ENCODE measurements at regions of chr10 and their contacts with region 1.

Region 1: DNA sequence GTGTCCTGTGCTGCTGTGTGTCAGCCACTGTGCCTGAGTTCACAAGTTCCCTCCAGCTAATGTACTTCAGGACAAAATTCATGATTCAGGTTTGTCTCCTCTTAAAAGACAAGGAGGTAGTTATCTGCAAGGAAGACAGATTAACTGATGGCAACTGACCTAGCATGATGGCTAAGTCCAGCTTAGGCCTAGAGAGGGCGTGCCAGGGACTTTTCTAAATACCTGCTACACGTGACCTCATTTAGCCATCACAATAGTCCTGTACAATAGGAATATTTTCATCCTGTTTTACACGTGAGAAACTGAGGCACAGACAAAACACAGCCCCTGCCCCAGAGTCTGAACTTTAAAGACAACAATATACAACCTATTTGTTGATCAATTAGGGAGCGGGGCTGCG is 275.7 kb downstream of the XPNPEP1 start:
- DNase-seq: no peak
- H3K4me3 ChIP-seq: no peak overlapping the region
- H3K27ac ChIP-seq: no peak overlapping the region
- H3K4me1 ChIP-seq: no peaks in the 10 kb centered on the region
- H3K27me3 ChIP-seq: peaks cover 1% of the 10 kb centered on the region
- CTCF ChIP-seq: peak in 1 of 2 donors; percentile 26

Region 2: DNA sequence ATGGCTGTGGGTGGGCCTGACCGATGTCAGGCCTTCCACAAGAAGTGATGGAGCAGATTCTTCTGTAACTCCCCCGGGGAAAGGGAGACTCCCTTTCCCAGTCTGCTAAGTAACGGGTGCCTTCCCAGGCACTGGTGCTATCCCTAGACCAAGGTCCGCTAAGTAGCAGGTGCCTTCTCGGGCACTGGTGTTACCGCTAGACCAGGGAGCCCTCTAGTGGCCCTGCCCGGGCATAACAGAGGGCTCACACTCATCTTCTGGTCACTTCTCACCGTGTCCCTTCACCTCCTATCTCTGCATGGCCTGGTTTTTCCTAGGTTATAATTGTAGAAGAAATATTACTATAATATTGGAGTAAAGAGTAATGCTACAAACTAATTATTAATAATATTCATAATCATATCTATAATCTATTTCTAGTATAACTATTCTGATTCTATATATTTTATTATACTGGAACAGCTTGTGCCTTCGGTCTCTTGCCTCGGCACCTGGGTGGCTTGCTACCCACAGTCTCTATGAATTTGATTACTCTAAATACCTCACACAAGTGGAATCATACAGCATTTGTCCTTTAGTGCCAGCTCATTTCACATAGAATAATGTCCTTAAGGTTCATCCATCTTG is 1103.0 kb before region 1 on chr10:
- CTCF ChIA-PET with region 1: no interaction called
- dilution Hi-C with region 1: no loop called
- in situ Hi-C with region 1: no loop called
- intact Hi-C with region 1: no loop called
- DNase-seq: peak; percentile 36
- H3K4me3 ChIP-seq: no peak overlapping the region
- H3K27ac ChIP-seq: no peak overlapping the region
- H3K4me1 ChIP-seq: no peaks in the 10 kb centered on the region
- H3K27me3 ChIP-seq: no peaks in the 10 kb centered on the region
- CTCF ChIP-seq: peak; percentile 75 to 93

Region 3: GRCh38 chr10:109126016-109126415 is 521.6 kb before region 1 on chr10:
- CTCF ChIA-PET with region 1: no interaction called
- dilution Hi-C with region 1: no loop called
- in situ Hi-C with region 1: no loop called
- intact Hi-C with region 1: no loop called
- DNase-seq: no peak
- H3K4me3 ChIP-seq: no peak overlapping the region
- H3K27ac ChIP-seq: no peak overlapping the region
- H3K4me1 ChIP-seq: no peaks in the 10 kb centered on the region
- H3K27me3 ChIP-seq: no peaks in the 10 kb centered on the region
- CTCF ChIP-seq: no peak

Region 4: GRCh38 chr10:109762555-109762954 is 114.9 kb after region 1 on chr10:
- CTCF ChIA-PET with region 1: no interaction called
- dilution Hi-C with region 1: no loop called
- in situ Hi-C with region 1: no loop called
- intact Hi-C with region 1: loop called (anchors 1 kb)
- DNase-seq: no peak
- H3K4me3 ChIP-seq: no peak overlapping the region
- H3K27ac ChIP-seq: no peak overlapping the region
- H3K4me1 ChIP-seq: no peaks in the 10 kb centered on the region
- H3K27me3 ChIP-seq: no peaks in the 10 kb centered on the region
- CTCF ChIP-seq: no peak

Region 5: DNA sequence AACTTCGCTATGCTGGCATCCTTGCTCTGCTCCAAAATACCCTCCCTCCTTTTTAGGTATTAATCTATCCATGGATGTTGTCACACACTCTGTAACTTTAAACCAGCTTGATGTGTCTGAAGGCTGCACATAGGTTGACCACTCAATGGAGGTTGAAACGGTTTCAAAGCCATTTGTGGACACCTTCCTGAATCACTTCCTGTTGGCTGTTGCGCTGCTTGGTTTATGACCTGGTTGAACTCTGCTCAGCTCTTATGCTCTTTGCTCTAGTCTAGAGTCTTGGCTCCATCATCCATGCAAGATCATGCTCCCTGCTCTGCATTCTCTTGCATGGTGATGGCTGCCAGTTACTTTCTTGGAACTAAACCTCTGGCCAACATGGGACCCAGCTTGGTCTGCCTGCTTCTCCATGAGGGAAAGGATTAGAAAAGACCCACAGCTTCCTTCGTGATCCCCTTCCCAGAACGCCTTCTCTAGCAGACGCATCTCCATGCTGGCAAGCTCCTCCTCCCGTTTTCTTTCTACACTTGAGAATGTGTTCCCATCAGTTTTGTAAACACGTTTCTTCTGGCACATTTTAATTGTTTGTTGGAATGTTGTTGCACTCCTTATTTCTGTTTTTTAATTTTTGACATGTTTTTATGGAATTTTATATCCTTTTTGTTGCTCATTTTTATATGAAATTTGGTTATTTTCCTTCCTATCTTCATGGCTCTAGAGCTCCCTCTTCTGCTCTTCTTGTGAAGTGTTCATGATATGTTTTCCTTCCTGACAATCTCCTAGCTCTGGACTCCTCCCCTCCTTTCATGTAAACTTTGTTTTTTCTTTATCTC is 125.9 kb after region 1 on chr10:
- CTCF ChIA-PET with region 1: no interaction called
- dilution Hi-C with region 1: no loop called
- in situ Hi-C with region 1: no loop called
- intact Hi-C with region 1: loop called (anchors 5 kb)
- DNase-seq: peak; percentile 4
- H3K4me3 ChIP-seq: no peak overlapping the region
- H3K27ac ChIP-seq: no peak overlapping the region
- H3K4me1 ChIP-seq: no peaks in the 10 kb centered on the region
- H3K27me3 ChIP-seq: no peaks in the 10 kb centered on the region
- CTCF ChIP-seq: peak; percentile 55 to 66

Region 6: GRCh38 chr10:109852475-109853037 is 204.9 kb after region 1 on chr10:
- CTCF ChIA-PET with region 1: no interaction called
- dilution Hi-C with region 1: no loop called
- in situ Hi-C with region 1: no loop called
- intact Hi-C with region 1: loop called (anchors 1 kb)
- DNase-seq: peak; percentile 44
- H3K4me3 ChIP-seq: no peak overlapping the region
- H3K27ac ChIP-seq: no peak overlapping the region
- H3K4me1 ChIP-seq: no peaks in the 10 kb centered on the region
- H3K27me3 ChIP-seq: no peaks in the 10 kb centered on the region
- CTCF ChIP-seq: peak; percentile 94 to 96

Region 7: DNA sequence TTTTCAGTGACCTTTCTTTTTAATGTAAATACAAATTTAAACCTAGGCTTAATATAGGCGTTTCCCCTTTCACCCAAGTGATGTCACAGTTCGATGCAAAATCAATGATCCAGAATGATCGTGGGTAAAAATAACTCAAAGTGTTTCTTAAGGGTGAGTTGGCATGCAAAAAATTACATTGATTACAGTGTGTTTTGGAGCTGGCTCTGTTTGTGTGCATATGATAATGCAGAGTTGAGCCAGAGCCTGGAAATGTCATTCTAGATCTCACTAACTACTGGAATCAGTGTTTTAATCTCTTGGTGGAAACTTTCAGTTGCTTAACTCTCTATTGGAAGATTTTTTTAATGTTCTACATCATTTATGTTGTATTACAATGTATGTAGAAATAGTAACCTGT is 487.3 kb after region 1 on chr10:
- CTCF ChIA-PET with region 1: no interaction called
- dilution Hi-C with region 1: no loop called
- in situ Hi-C with region 1: no loop called
- intact Hi-C with region 1: no loop called
- DNase-seq: no peak
- H3K4me3 ChIP-seq: no peak overlapping the region
- H3K27ac ChIP-seq: no peak overlapping the region
- H3K4me1 ChIP-seq: peaks cover 3% of the 10 kb centered on the region
- H3K27me3 ChIP-seq: no peaks in the 10 kb centered on the region
- CTCF ChIP-seq: no peak

Measured in mammary epithelial cell (primary cell).